ENCODE measurements at regions of chr2 and their contacts with region 1.

Region 1: DNA sequence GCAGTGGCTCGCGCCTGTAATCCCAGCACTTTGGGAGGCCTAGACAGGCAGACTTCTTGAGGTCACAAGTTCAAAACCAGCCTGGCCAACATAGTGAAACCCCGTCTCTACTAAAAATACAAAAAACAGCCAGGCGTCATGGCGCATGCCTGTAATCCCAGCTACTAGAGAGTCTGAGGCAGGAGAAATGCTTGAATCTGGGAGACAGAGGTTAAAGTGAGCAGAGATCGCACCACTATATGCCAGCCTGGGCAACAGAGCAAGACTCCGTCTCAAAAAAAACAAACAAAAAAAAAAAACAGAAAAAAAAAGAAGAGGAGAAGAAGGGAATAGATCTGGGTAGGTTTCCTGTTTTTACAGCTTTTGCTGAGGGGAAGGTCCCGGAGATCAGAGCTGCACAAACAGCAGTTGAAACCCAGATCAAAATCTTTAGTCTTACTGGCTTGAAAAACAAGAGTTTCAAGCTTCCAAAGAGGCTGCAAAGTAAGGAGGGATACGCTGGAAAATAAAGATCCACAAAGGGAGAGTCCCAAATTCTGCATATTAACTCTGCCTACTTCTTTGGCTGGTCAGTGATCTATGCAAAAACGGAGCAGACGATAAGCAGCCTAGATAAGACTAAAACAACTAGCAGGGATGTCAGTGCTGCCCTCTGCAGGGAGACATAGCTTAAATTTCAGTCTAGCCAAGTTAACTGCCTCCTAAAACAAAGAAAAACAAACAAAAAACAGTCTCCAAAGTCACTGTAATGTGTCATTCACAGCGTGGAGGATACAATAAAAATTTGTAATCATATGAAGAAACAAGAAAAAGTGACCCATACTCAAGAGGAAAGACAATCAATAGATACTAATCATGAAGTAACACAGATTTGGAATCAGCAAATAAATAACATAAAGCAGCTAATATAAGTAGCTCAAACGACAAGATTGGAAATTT is 74.1 kb downstream of the TLK1 start:
- DNase-seq: peak in 1 of 2 experiments; percentile 34
- H3K4me3 ChIP-seq: no peak overlapping the region
- H3K27ac ChIP-seq: no peak overlapping the region
- H3K4me1 ChIP-seq: peaks cover 0 to 5% (median 0%) of the 10 kb centered on the region in 4 experiments; a peak in 2 of 7 replicates
- H3K27me3 ChIP-seq: no peaks in the 10 kb centered on the region
- CTCF ChIP-seq: peak in 2 of 3 experiments; percentile 48 to 79; a peak in 2 of 4 replicates
- EP300 ChIP-seq: no peak
- POLR2A ChIP-seq: no peak
- RAD21 ChIP-seq: peak; percentile 40 to 53

Region 2: GRCh38 chr2:170766693-170767092 is 319.9 kb before region 1 on chr2:
- CTCF ChIA-PET with region 1: no interaction called
- POLR2A ChIA-PET with region 1: no interaction called
- DNase-seq: no peak
- H3K4me3 ChIP-seq: no peak overlapping the region
- H3K27ac ChIP-seq: no peak overlapping the region
- H3K4me1 ChIP-seq: peaks cover 0 to 6% (median 5%) of the 10 kb centered on the region in 4 experiments; a peak in 5 of 7 replicates
- H3K27me3 ChIP-seq: no peaks in the 10 kb centered on the region
- CTCF ChIP-seq: no peak
- EP300 ChIP-seq: no peak
- POLR2A ChIP-seq: no peak
- RAD21 ChIP-seq: no peak

Region 3: DNA sequence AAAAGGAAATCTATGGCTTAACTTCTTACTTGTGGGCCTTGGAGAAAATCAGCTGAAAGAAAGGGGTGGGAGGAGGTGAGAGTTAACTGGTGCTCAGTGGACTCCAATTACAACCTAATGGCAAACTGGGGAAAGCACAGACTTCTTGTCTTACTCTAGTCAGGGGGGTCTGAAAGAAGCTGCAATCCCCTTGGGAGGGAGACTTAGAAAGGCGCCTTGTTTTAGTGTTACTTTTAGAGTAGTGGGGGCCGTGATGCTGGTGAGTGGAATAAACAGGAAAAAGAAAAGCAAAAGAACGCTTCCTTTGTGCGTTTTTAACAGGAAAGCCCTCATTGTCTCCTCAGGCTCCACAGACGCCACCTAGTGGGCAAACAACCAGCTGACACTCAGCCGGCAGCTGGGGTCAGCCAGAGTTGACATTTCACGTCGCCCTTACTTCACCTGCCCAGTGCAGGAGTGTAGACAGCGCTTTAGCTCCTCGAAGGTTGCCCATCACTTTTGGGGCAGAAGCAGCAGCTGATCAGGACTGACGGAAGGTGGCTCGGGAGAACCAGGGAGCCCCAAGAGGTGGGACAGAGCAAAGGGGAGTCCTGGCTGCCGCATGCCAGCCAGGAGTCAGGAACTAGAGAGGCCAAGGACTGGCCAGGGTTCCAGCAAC is 213.5 kb before region 1 on chr2:
- CTCF ChIA-PET with region 1: no interaction called
- POLR2A ChIA-PET with region 1: no interaction called
- DNase-seq: peak; percentile 44 to 90
- H3K4me3 ChIP-seq: peak overlapping the region in 1 of 4 experiments; percentile 43; a peak in 1 of 8 replicates
- H3K27ac ChIP-seq: no peak overlapping the region
- H3K4me1 ChIP-seq: peaks cover 0 to 3% (median 0%) of the 10 kb centered on the region in 4 experiments; a peak in 1 of 7 replicates
- H3K27me3 ChIP-seq: no peaks in the 10 kb centered on the region
- CTCF ChIP-seq: peak; percentile 82 to 97 (median 92)
- EP300 ChIP-seq: no peak
- POLR2A ChIP-seq: no peak
- RAD21 ChIP-seq: peak; percentile 61 to 72

Region 4: GRCh38 chr2:170973492-170974303 is 112.9 kb before region 1 on chr2:
- CTCF ChIA-PET with region 1: interaction called, 15 read pairs
- POLR2A ChIA-PET with region 1: no interaction called
- DNase-seq: peak; percentile 27 to 93
- H3K4me3 ChIP-seq: peak overlapping the region; percentile 18 to 58 (median 42); a peak in 6 of 8 replicates
- H3K27ac ChIP-seq: no peak overlapping the region; the same call in 1 of the 2 replicates
- H3K4me1 ChIP-seq: peaks cover 0 to 10% (median 3%) of the 10 kb centered on the region in 4 experiments; a peak in 6 of 7 replicates
- H3K27me3 ChIP-seq: no peaks in the 10 kb centered on the region
- CTCF ChIP-seq: peak; percentile 83 to 93 (median 83)
- EP300 ChIP-seq: peak in 1 of 2 experiments; percentile 60; a peak in 1 of 3 replicates
- POLR2A ChIP-seq: 0 out of 3 replicates have a peak, but pooled peaks of 1 of the 2 experiments have one; percentile 40
- RAD21 ChIP-seq: peak; percentile 89 to 96

Region 5: DNA sequence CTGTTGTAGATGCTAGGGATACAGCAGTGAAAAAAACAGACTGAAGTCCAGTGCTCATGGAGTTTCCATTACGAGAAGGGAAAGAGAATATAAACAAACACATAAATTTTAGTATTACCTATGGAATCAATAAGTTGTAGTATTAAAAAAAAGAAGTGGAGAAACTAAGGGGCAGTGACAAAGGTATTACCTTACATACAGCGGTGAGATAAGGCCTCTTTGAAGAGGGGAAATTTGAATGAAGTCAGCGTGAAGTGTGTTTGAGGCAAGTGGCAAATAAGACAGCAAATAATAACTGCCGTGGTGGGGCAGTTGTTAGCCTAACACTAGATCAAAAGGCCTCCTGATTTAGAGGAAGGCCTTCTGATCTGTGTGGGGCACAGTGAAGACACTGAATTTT is 16.2 kb after region 1 on chr2:
- CTCF ChIA-PET with region 1: interaction called, 16 read pairs
- POLR2A ChIA-PET with region 1: no interaction called
- DNase-seq: no peak
- H3K4me3 ChIP-seq: no peak overlapping the region
- H3K27ac ChIP-seq: no peak overlapping the region
- H3K4me1 ChIP-seq: peaks cover 0 to 3% (median 0%) of the 10 kb centered on the region in 4 experiments; a peak in 1 of 7 replicates
- H3K27me3 ChIP-seq: no peaks in the 10 kb centered on the region
- CTCF ChIP-seq: no peak
- EP300 ChIP-seq: no peak
- POLR2A ChIP-seq: no peak
- RAD21 ChIP-seq: no peak

Region 6: GRCh38 chr2:171136024-171136423 is 49.4 kb after region 1 on chr2:
- CTCF ChIA-PET with region 1: interaction called, 12 read pairs
- POLR2A ChIA-PET with region 1: no interaction called
- DNase-seq: no peak
- H3K4me3 ChIP-seq: no peak overlapping the region
- H3K27ac ChIP-seq: no peak overlapping the region
- H3K4me1 ChIP-seq: peaks cover 3 to 7% (median 5%) of the 10 kb centered on the region in 4 experiments; a peak in 6 of 7 replicates
- H3K27me3 ChIP-seq: no peaks in the 10 kb centered on the region
- CTCF ChIP-seq: no peak
- EP300 ChIP-seq: no peak
- POLR2A ChIP-seq: no peak
- RAD21 ChIP-seq: no peak

Region 7: GRCh38 chr2:171160119-171160955 is 73.7 kb after region 1 on chr2 and contains the start of gene TLK1:
- CTCF ChIA-PET with region 1: interaction called, 10 read pairs
- POLR2A ChIA-PET with region 1: no interaction called
- DNase-seq: peak in 1 of 2 experiments; percentile 84
- H3K4me3 ChIP-seq: peak within 1 kb of the TSS; percentile 87 to 100 (median 92)
- H3K27ac ChIP-seq: peak within 1 kb of the TSS; percentile 92
- H3K4me1 ChIP-seq: peaks cover 0 to 3% (median 0%) of the 10 kb centered on the region in 4 experiments; a peak in 3 of 7 replicates
- H3K27me3 ChIP-seq: no peaks in the 10 kb centered on the region
- CTCF ChIP-seq: no peak
- EP300 ChIP-seq: 0 out of 3 replicates have a peak, but pooled peaks of 1 of the 2 experiments have one; percentile 3
- POLR2A ChIP-seq: peak in 1 of 2 experiments; percentile 68; a peak in 2 of 3 replicates
- RAD21 ChIP-seq: peak in 1 of 2 experiments; percentile 45; a peak in 2 of 4 replicates
- total RNA-seq, gene TLK1: 97.4 and 102 TPM in 2 replicates